ENCODE measurements at regions of chr3 and their contacts with region 1.

Region 1: DNA sequence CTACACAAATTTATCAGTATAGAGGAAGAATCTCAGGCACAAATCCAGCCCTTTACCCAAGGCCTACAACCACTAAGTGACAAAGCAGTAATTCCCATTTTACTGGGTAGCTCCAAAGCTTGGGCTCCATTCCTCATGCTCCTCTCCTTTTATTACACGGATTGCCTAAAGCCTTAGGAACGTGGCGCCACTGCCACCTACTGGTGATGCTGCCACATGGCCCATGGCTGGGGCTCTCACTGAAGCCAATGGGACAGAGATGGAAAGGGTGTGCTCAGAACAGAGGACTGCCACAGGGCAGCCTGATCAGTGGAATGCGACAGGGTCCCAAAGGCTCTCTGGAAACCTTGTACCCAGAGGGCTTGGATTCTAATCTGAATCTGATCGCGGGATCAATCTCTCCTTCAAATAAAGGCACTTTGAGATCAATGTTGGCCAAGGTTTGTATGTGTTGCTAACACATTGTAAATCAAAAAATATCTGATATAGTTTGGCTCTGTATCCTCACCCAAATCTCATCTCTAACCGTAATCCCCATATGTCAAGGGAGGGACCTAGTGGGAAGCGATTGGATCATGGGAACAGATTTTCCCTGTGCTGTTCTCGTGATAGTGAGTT is 33.5 kb upstream of the LYZL4 start:
- DNase-seq: peak; percentile 83
- ATAC-seq: peak; percentile 91
- H3K4me3 Mint-ChIP-seq: no peak overlapping the region
- H3K27ac Mint-ChIP-seq: no peak overlapping the region
- H3K4me1 Mint-ChIP-seq: no peaks in the 10 kb centered on the region
- H3K27me3 Mint-ChIP-seq: peaks cover 6% of the 10 kb centered on the region
- CTCF ChIP-seq: peak; percentile 91

Region 2: DNA sequence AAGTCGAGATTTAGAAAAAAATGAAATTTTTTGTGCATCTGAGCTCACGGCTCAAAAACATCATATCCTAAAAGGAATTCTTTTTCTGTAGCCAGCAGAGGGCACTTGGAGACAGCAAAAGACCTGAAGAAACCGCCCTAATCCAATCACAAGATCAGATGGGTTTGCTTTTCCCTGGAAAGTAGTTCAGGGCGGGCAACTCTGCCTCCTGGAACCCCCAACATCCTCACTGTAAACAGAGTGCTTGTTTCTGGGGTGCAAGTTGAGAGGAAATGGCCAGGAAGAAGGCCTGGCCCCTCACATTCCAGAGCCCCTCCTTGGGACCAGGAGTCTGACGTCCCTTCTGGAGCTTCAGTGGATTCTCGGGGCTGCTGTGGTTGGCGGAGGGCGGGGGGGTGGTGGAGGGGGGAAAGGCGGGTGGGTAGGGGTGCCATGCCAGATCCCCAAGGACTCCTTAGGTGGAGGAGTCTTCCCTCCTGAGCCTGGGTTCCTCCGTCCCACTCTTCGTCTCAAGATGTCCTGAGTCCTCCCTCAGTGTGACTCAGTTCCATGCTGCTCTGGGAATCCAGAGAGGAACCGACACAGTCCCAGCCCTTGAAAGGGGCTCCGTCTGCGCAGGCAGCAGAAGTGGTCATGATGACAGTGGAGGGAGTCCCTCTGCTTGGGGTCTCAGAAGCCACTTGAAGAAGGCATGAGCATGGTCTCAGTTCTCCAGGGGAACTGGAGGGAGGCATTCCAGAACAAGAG is 213.8 kb before region 1 on chr3:
- CTCF ChIA-PET with region 1: interaction called, 5 read pairs
- POLR2A ChIA-PET with region 1: no interaction called
- intact Hi-C with region 1: loop called (anchors 5 kb)
- DNase-seq: no peak
- ATAC-seq: no peak
- H3K4me3 Mint-ChIP-seq: no peak overlapping the region
- H3K27ac Mint-ChIP-seq: no peak overlapping the region
- H3K4me1 Mint-ChIP-seq: no peaks in the 10 kb centered on the region
- H3K27me3 Mint-ChIP-seq: peaks cover 2% of the 10 kb centered on the region
- CTCF ChIP-seq: peak; percentile 21

Region 3: GRCh38 chr3:42256135-42256819 is 187.7 kb before region 1 on chr3:
- CTCF ChIA-PET with region 1: interaction called, 10 read pairs
- POLR2A ChIA-PET with region 1: no interaction called
- intact Hi-C with region 1: no loop called
- DNase-seq: no peak
- ATAC-seq: peak; percentile 86
- H3K4me3 Mint-ChIP-seq: no peak overlapping the region
- H3K27ac Mint-ChIP-seq: no peak overlapping the region
- H3K4me1 Mint-ChIP-seq: peaks cover 8% of the 10 kb centered on the region
- H3K27me3 Mint-ChIP-seq: peaks cover 36% of the 10 kb centered on the region
- CTCF ChIP-seq: no peak

Region 4: GRCh38 chr3:42590989-42591756 is 147.2 kb after region 1 on chr3:
- CTCF ChIA-PET with region 1: no interaction called
- POLR2A ChIA-PET with region 1: no interaction called
- intact Hi-C with region 1: no loop called
- DNase-seq: peak; percentile 29
- ATAC-seq: no peak
- H3K4me3 Mint-ChIP-seq: peak overlapping the region; percentile 91
- H3K27ac Mint-ChIP-seq: peak overlapping the region; percentile 97
- H3K4me1 Mint-ChIP-seq: peaks cover 35% of the 10 kb centered on the region
- H3K27me3 Mint-ChIP-seq: no peaks in the 10 kb centered on the region
- CTCF ChIP-seq: no peak

Region 5: GRCh38 chr3:42749753-42750231 is 305.9 kb after region 1 on chr3:
- CTCF ChIA-PET with region 1: no interaction called
- POLR2A ChIA-PET with region 1: no interaction called
- intact Hi-C with region 1: no loop called
- DNase-seq: no peak
- ATAC-seq: no peak
- H3K4me3 Mint-ChIP-seq: no peak overlapping the region
- H3K27ac Mint-ChIP-seq: no peak overlapping the region
- H3K4me1 Mint-ChIP-seq: peaks cover 11% of the 10 kb centered on the region
- H3K27me3 Mint-ChIP-seq: no peaks in the 10 kb centered on the region
- CTCF ChIP-seq: no peak

Measured in activated CD8-positive, alpha-beta T cell treated with anti-CD3 and anti-CD28 coated beads for 36 hours (primary cell).